Activated T-helper 1 cell treated with anti-CD3 and anti-CD28 coated beads, Interleukin-12 subunit alpha, Interleukin-12 subunit beta, Interleukin-2, Interleukin-4 antibody, amounts not matched to agents 30 ng/mL and 10 ng/mL and 1 ng/mL, durations not matched to agents 14 hours and 24 hours and 36 hours (primary cell): ENCODE measurements at regions of chr22 and their contacts with region 1.

Region 1: DNA sequence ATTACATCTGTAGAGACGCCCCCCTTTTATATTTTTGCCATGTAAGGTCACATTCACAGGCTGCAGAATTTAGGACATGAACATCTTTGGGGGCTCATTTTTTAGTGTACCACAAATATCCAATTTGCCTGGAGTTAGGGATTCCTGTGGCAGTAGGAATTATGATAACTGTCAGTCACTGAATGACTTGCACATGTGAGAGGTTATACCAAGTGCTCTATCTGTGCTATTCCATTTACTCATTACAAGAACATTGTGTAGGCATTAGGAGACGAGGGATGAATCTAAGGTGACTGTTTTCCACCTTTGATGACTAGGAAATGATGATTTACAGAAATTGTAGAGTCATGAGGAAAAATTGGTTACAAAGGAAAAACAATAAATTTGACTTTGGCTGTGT is 79.3 kb downstream of the LIF start:
- DNase-seq: no peak
- H3K4me3 Mint-ChIP-seq: no peak overlapping the region
- H3K27ac Mint-ChIP-seq: no peak overlapping the region
- H3K4me1 Mint-ChIP-seq: peaks cover 16% of the 10 kb centered on the region
- H3K27me3 Mint-ChIP-seq: no peaks in the 10 kb centered on the region

Region 2: DNA sequence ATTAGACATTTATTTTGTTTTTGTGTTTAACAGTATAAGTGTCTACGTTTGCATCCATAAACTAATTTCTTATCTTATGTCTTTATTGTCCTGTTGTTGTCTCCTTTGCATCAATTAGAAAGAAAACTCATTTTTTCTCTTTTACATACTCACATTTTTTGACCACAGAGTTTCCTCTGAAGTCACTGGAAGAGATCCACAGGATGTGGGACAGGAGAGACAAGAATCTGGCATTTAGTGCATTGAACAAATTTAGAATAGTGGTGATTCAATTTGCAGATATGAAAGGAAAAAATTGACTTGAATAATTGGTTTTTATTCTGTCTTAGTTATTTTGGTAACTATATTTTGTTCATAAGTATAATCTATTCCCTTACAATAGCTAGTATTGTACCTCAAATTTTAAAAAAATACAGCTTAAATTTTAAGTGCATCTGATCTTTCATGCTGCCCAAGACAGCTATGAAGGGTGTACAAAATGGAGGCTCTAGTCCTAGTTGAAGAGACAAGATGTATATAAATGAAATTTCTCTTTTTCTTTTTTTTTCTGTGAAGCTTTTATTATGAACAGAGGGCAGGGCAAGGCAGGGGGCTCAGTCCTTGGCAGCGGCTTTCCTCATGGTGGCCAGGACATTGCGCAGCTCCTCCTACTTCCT is 62.7 kb before region 1 on chr22:
- intact Hi-C with region 1: loop called (anchors 1 kb)
- DNase-seq: peak; percentile 23
- H3K4me3 Mint-ChIP-seq: peak overlapping the region; percentile 37
- H3K27ac Mint-ChIP-seq: peak overlapping the region; percentile 82
- H3K4me1 Mint-ChIP-seq: peaks cover 57% of the 10 kb centered on the region
- H3K27me3 Mint-ChIP-seq: no peaks in the 10 kb centered on the region

Region 3: DNA sequence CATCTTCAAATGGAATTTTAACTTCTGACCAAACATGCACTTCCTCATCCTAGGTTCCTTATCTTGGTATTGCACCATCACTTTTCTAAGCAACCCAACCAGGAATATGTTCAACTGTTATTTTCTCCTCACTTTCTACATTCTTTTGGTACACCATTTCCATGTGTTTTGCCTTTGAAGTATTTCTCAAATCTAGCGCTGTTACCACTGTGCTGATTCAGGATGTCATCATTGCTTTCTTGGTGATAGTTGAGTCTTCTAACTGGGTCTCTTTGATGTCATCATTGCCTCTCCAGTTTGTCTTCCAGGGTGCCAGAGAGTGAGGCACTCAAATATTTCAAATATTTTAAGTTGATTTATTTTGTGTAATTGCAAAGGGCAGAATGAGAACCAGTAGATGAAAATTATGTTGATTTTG is 39.5 kb before region 1 on chr22:
- intact Hi-C with region 1: loop called (anchors 2 kb)
- DNase-seq: no peak
- H3K4me3 Mint-ChIP-seq: no peak overlapping the region
- H3K27ac Mint-ChIP-seq: no peak overlapping the region
- H3K4me1 Mint-ChIP-seq: peaks cover 35% of the 10 kb centered on the region
- H3K27me3 Mint-ChIP-seq: no peaks in the 10 kb centered on the region

Region 4: DNA sequence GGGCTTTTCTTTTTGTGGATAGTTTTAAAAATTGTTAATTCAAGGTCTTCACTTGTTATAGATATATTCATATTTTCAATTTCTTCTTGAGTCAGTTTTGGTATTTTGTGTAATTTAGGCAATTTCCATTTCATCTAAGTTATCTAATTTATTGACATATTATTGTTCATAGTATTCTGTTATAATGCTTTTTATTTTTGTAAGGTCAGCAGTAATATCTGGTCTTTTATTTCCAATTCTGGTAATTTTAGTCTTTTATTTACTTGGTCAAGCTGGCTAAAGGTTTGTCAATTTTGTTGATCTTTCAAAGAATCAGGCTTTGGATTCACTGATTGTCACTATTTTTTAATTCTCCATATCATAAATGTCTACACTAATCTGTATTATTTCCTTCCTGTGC is 26.9 kb before region 1 on chr22:
- intact Hi-C with region 1: no loop called
- DNase-seq: no peak
- H3K4me3 Mint-ChIP-seq: no peak overlapping the region
- H3K27ac Mint-ChIP-seq: no peak overlapping the region
- H3K4me1 Mint-ChIP-seq: no peaks in the 10 kb centered on the region
- H3K27me3 Mint-ChIP-seq: no peaks in the 10 kb centered on the region

Region 5: GRCh38 chr22:30178181-30179126 is 11.2 kb after region 1 on chr22:
- intact Hi-C with region 1: loop called (anchors 1 kb)
- DNase-seq: peak; percentile 49
- H3K4me3 Mint-ChIP-seq: peak overlapping the region; percentile 56
- H3K27ac Mint-ChIP-seq: peak overlapping the region; percentile 97
- H3K4me1 Mint-ChIP-seq: peaks cover 87% of the 10 kb centered on the region
- H3K27me3 Mint-ChIP-seq: no peaks in the 10 kb centered on the region

Region 6: DNA sequence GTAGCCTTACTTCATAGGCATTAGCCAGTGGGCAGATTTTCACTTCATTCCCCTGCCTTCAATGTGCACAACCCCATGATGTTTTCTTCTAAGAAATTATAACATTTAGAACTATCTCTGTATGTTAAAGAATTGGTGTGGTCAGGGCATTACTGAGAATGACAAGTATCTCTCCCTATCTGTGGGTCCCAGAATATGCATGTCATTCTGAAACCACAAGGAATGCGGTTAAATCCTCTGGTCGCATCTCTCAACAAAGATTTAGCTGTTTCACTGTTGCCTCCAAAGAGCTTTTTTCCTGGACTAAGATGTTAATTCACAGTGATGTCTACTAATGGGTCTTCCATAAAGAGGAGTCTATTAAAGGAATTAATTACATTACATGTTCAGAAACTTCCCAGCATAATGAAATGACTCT is 16.6 kb after region 1 on chr22:
- intact Hi-C with region 1: loop called (anchors 1 kb)
- DNase-seq: peak; percentile 25
- H3K4me3 Mint-ChIP-seq: peak overlapping the region; percentile 69
- H3K27ac Mint-ChIP-seq: peak overlapping the region; percentile 95
- H3K4me1 Mint-ChIP-seq: peaks cover 96% of the 10 kb centered on the region
- H3K27me3 Mint-ChIP-seq: no peaks in the 10 kb centered on the region

Region 7: DNA sequence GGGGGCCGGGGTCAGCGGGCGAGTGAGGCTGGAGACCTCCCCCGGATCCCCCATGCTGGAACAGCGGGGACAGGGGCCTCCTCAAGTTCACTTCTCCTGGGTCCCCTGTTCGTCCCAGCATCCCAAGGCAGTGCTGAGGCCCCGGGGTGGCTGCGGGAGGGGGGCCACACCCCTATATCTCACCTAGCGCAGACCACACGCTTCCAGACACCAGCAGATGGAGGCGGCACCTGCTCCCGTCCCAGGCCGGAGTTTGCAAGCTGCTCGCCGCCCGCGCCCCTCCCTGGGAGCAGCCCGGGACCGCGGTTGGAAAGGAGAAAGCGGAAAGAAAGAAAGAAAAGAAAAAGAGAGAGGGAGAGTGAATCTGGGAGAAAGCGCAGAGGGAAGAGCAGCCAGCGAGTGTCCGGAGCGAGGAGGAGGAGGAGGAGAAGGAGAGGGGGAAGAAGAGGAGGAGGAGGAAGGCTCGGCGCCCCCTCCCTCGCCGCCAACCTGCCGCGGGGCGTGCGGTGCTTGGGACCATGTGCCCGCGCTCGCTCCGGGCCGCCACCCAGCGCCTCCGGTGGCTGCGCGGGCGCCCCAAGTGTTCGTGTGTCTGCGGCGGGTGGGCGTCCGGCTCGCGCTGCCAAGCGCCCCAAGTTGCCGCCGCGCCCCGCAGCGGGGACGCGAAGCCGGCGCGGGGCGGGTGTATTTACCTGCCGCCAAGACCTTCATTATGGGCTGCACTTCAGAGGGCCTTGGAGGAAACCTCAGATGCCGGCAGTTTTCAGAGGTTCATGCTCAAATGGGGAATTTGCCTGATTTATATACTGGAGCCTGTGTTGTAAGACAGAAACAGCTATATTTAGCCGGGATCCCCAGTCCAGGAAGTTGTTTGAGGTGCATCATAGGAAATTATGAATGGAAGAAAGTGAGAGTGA is 78.9 kb after region 1 on chr22 and contains the start of gene LIF:
- intact Hi-C with region 1: loop called (anchors 1 kb)
- DNase-seq: peak; percentile 53
- H3K4me3 Mint-ChIP-seq: peak within 1 kb of the TSS; percentile 100
- H3K27ac Mint-ChIP-seq: peak within 1 kb of the TSS; percentile 100
- H3K4me1 Mint-ChIP-seq: peaks cover 64% of the 10 kb centered on the region
- H3K27me3 Mint-ChIP-seq: no peaks in the 10 kb centered on the region
- total RNA-seq, gene LIF: 450 and 455 TPM in 2 replicates

Region 8: GRCh38 chr22:30606455-30607299 is 439.4 kb after region 1 on chr22 and contains the start of gene TCN2:
- intact Hi-C with region 1: no loop called
- DNase-seq: peak; percentile 19
- H3K4me3 Mint-ChIP-seq: peak within 1 kb of the TSS; percentile 82
- H3K27ac Mint-ChIP-seq: peak within 1 kb of the TSS; percentile 47
- H3K4me1 Mint-ChIP-seq: peaks cover 65% of the 10 kb centered on the region
- H3K27me3 Mint-ChIP-seq: no peaks in the 10 kb centered on the region
- total RNA-seq, gene TCN2: 0.23 and 0.34 TPM in 2 replicates